Head of caudate nucleus (tissue), 42 donors: ENCODE measurements at regions of chr1 and their contacts with region 1.

Region 1: GRCh38 chr1:25204797-25205480 is 27.4 kb downstream of the SYF2 start:
- DNase-seq: peak in 6 of 42 donors; percentile 19 to 53 (median 28)

Region 2: DNA sequence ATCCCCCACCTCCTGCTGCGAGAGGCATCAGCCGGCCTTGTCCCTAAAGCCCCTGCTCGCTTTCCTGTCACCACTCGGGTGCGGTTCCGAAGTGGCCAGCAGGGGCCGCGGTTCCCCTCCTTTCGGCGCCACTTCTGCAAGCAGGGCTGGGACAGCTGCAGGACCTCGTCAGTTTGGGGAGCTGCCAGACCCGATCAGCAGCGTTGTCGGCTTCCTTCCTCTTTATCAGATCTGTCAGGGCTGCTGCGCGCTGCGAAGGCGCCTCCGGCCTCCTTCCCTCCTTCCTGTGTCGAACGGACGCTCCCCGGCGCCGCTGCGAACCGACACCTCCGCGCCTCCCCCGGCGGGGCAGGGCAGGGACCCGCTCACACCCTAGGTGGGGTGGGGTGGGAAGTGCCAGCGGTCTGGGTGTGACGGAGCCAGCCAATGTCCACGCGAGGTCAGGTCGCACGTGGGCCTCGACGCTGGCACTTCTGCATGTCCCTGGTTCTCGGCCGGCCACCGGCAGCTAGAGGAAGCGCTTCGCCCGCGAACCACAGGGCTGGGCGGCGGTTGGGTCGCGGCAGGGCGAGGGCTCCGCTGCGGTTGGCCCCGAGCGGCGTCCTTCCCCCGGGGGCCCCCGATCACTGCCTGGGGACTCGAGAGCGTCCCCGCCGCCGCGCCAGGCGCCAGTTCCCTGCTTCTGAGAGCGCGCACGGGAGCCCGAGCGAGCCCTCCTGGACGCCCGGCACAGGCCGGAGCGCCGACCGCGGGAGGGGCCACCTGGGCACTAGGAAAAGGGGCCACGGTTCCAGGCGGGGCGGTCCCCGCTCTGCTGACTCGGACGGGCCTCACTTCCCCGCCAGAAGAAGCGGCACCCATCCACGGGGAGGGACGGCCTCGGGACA is 356.7 kb before region 1 on chr1:
- intact Hi-C with region 1: loop called (anchors 10 kb)
- DNase-seq: peak; percentile 84 to 97 (median 92)

Region 3: GRCh38 chr1:24930204-24931145 is 274.5 kb before region 1 on chr1 and contains the start of gene RUNX3:
- intact Hi-C with region 1: loop called (anchors 10 kb)
- DNase-seq: peak in 25 of 42 donors; percentile 9 to 64 (median 39)

Region 4: GRCh38 chr1:25148673-25149300 is 56.2 kb before region 1 on chr1:
- intact Hi-C with region 1: loop called (anchors 10 kb)
- DNase-seq: peak in 1 of 42 donors; percentile 14

Region 5: GRCh38 chr1:25161981-25162380 is 43.0 kb before region 1 on chr1:
- intact Hi-C with region 1: no loop called
- DNase-seq: no peak